Activated naive CD4-positive, alpha-beta T cell treated with anti-CD3 and anti-CD28 coated beads for 36 hours (primary cell): ENCODE measurements at regions of chr1 and their contacts with region 1.

Region 1: GRCh38 chr1:40508375-40509341 is at the start of gene EXO5:
- DNase-seq: peak; percentile 90
- H3K4me3 Mint-ChIP-seq: peak within 1 kb of the TSS; percentile 80
- H3K27ac Mint-ChIP-seq: peak within 1 kb of the TSS; percentile 81
- H3K4me1 Mint-ChIP-seq: peaks cover 10% of the 10 kb centered on the region
- H3K27me3 Mint-ChIP-seq: no peaks in the 10 kb centered on the region
- total RNA-seq, gene EXO5: 9.4 to 9.9 TPM

Region 2: DNA sequence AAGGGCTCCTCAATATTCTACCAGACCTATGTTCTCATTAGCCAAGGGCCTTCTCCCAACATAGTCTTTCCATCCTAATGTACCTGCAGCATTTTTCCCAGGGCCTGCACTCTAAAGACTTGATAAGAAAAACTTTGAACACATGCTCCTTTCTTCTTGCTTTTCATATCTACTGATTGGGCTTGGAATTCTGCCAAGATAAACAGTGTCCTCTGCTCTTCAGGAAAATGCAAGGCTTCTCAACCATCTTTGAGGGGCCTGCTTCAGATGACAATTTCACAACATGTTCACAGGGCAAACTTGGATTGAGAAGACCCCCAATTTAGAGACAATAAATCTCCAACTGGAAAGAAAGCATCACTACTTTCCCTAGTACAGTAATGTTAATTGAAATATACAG is 385.8 kb before region 1 on chr1:
- CTCF ChIA-PET with region 1: no interaction called
- intact Hi-C with region 1: no loop called
- DNase-seq: no peak
- H3K4me3 Mint-ChIP-seq: no peak overlapping the region
- H3K27ac Mint-ChIP-seq: no peak overlapping the region
- H3K4me1 Mint-ChIP-seq: no peaks in the 10 kb centered on the region
- H3K27me3 Mint-ChIP-seq: no peaks in the 10 kb centered on the region

Region 3: GRCh38 chr1:40153073-40153770 is 355.4 kb before region 1 on chr1:
- CTCF ChIA-PET with region 1: no interaction called
- intact Hi-C with region 1: no loop called
- DNase-seq: peak; percentile 51
- H3K4me3 Mint-ChIP-seq: no peak overlapping the region
- H3K27ac Mint-ChIP-seq: peak overlapping the region; percentile 10
- H3K4me1 Mint-ChIP-seq: peaks cover 7% of the 10 kb centered on the region
- H3K27me3 Mint-ChIP-seq: peaks cover 2% of the 10 kb centered on the region

Region 4: GRCh38 chr1:40476924-40477677 is 31.6 kb before region 1 on chr1 and contains the start of gene ZFP69:
- CTCF ChIA-PET with region 1: no interaction called
- intact Hi-C with region 1: loop called (anchors 1 kb)
- DNase-seq: peak; percentile 72
- H3K4me3 Mint-ChIP-seq: peak within 1 kb of the TSS; percentile 83
- H3K27ac Mint-ChIP-seq: peak within 1 kb of the TSS; percentile 60
- H3K4me1 Mint-ChIP-seq: peaks cover 20% of the 10 kb centered on the region
- H3K27me3 Mint-ChIP-seq: no peaks in the 10 kb centered on the region
- total RNA-seq, gene ZFP69: 3.5 to 3.8 TPM

Region 5: DNA sequence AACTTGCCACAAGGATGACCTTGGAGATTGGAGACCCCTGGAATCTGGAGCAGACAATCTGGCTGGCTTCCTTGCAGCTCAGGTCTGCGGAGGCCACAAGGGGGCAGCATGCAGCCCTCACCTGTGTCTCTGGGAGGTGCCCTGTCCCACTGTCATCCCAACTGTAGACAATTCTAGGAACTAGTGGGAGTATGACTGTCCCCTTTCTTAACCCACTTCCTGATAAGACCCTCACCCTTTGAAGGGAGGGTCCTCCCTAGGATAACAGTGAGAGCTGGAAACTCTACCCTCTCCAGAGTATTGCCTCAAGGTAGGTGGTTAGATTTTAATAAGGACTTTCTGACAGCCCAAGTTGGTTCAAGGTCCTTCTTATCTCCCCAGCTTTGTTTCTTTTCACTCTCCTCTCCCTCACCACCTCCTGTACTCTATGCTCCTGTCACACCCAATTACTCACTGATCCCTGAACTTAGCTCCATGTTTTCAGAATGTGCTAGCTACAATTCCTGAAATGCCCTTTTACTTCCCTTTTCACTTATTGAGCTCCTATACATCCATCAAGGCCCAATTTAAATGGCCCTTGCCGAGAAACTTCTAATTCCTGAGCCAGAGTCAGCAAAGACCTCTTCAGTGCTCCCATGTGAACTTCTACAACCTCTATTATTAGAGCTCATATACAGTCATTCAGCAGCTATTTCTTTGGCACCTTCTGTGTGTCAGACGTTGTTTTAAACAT is 265.8 kb after region 1 on chr1:
- CTCF ChIA-PET with region 1: no interaction called
- intact Hi-C with region 1: no loop called
- DNase-seq: peak; percentile 79
- H3K4me3 Mint-ChIP-seq: no peak overlapping the region
- H3K27ac Mint-ChIP-seq: no peak overlapping the region
- H3K4me1 Mint-ChIP-seq: no peaks in the 10 kb centered on the region
- H3K27me3 Mint-ChIP-seq: no peaks in the 10 kb centered on the region